PC-9 (cell line): ENCODE measurements at regions of chr20 and their contacts with region 1.

Region 1: DNA sequence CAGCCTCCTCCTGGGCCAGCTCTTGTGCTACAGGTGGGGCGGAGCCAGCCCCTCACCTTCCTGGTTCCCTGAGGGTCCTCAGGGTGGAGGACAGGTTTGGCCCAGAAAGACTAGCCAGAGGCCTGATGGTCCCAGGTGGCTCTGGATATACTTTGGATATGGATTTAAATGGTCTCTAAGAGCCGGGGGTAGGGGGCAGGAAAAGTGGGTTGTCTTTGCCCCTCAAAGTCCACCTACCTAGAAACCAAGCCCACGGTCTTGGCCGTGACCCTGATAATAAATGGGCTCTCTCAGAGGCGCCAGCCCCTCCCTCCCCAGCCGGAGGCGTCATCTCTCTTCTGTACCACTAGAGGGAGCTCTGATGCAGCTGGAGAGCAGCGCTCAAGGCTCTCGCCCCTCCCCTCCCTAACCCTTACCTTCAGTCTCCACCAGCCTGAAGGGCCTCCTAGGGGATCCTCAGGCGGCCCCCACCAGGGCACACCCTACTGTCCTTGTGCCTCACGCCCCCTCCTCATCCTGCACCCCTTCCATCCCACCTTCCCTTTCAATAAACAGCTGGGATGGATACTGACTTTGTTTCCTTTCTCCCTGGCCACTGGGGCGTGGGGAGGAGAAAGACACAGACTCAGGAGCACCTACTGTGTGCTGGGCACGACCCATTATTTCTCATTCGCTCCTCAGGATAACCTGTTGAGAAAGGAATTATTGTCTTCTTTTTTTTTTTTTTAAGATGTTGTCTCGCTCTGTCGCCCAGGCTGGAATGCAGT is 7.6 kb downstream of the NRSN2 start:
- DNase-seq: peak; percentile 59 to 80
- H3K4me3 ChIP-seq: no peak overlapping the region
- H3K27ac ChIP-seq: no peak overlapping the region
- H3K4me1 ChIP-seq: no peaks in the 10 kb centered on the region
- H3K27me3 ChIP-seq: no peaks in the 10 kb centered on the region
- CTCF ChIP-seq: peak; percentile 96

Region 2: DNA sequence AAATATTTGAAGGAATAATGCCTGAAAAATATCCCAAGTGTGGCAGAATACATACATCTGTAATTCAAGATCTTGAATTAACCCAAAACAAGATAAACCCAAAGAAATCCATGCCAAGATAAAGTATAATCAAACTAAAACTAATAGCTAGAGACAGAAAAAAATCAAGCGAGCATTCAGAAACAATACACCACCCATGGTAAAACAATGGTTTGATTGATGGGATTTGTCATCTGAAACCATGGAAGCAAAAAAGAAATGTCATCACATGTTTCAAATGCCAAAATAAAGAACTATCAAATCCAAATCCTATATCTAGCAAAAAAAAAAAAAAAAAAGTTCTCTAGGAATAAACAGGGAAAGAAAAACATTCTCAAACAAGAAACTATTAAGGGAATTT is 202.3 kb before region 1 on chr20:
- CTCF ChIA-PET with region 1: no interaction called
- POLR2A ChIA-PET with region 1: no interaction called
- intact Hi-C with region 1: no loop called
- DNase-seq: no peak
- H3K4me3 ChIP-seq: no peak overlapping the region
- H3K27ac ChIP-seq: no peak overlapping the region
- H3K4me1 ChIP-seq: no peaks in the 10 kb centered on the region
- H3K27me3 ChIP-seq: peaks cover 68% of the 10 kb centered on the region
- CTCF ChIP-seq: no peak

Region 3: DNA sequence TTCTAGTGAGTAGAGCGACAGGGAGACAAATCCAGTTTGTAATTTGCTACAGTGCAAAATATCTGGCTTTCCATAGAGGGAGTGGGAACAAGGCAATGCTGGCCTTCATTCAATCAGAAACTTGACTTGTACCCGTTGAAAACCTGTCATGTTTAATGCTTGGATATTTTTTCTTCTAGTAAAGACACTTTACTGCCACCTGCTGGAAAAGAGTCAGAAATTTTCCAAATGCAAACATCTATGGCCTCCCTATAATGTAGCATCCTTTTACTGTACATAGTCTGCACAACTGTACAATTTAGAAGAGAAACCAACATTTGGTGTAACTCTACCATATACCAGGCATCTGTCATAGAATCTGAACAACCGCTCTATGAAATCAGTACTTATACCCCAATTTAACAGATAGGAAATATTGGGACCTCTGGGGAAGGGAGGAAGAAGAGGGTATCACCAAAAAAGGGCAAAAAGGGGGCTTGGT is 124.5 kb after region 1 on chr20:
- CTCF ChIA-PET with region 1: interaction called, 3 read pairs
- POLR2A ChIA-PET with region 1: no interaction called
- intact Hi-C with region 1: loop called (anchors 1 kb)
- DNase-seq: peak in 1 of 2 experiments; percentile 21
- H3K4me3 ChIP-seq: no peak overlapping the region
- H3K27ac ChIP-seq: no peak overlapping the region
- H3K4me1 ChIP-seq: no peaks in the 10 kb centered on the region
- H3K27me3 ChIP-seq: no peaks in the 10 kb centered on the region
- CTCF ChIP-seq: peak; percentile 79

Region 4: DNA sequence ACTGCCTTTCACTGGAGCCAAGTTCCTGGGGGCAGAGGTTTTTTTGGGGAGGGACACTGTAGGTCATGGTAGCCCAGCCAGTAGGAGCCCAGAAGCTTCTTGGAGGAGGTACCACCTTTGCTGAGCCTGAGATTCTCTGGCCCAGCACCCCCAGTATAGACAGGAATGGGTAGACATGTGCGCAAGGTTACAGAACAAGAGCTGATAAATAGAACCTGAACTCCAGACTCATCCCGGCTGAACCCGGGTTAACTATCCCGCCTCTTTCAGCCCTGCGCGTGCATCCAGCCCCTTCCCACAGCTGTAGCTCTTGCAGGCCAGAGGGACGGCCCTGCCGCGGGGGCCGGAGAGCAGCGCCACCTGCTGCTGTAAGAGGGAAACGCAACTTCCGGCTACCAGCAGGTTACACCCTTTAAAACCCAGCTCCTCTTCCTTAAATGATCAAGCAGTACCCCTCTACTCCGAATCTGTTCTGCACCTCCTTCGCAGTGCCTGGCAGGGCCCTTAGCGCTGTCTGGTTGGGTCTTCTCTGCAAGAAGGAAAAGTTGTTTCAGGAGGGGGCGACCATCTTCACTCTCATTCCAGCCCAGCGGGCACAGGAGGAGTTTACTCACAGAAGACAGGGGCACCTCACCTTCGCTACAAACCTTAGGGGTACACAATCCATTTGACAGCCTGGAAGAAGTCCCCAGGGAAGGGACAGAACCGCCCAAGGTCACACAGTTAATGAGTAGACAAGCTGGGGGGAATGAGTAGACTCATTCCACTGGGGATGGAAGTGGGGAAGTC is 291.0 kb after region 1 on chr20:
- CTCF ChIA-PET with region 1: no interaction called
- POLR2A ChIA-PET with region 1: interaction called, 4 read pairs
- intact Hi-C with region 1: loop called (anchors 5 kb)
- DNase-seq: peak; percentile 57 to 79
- H3K4me3 ChIP-seq: no peak overlapping the region
- H3K27ac ChIP-seq: no peak overlapping the region
- H3K4me1 ChIP-seq: 0 out of 2 replicates have a peak, but pooled peaks cover 6% of the 10 kb centered on the region
- H3K27me3 ChIP-seq: no peaks in the 10 kb centered on the region
- CTCF ChIP-seq: peak; percentile 93